ENCODE measurements at regions of chr9 and their contacts with region 1.

Region 1: DNA sequence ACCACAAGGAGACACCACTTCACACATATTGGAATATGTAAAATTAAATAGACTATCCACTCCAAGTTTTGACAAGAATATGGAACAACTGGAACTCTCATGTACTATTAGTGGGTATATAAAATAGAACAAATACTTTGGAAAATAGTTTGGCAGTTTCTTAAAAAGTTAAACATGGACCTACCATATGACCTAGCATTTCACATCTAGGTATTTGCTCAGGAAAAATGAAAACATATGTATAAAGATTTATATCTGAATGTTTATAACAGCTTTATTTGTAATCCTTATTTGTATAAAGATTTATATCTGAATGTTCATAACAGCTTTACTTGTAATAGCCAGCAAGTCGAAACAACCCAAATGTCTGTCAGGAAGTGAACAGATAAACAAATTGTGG is 49.2 kb downstream of the ERP44 start:
- DNase-seq: no peak
- H3K4me3 ChIP-seq: no peak overlapping the region
- H3K27me3 ChIP-seq: no peaks in the 10 kb centered on the region
- CTCF ChIP-seq: no peak

Region 2: GRCh38 chr9:100505564-100506159 is 456.1 kb after region 1 on chr9:
- CTCF ChIA-PET with region 1: no interaction called
- POLR2A ChIA-PET with region 1: interaction called, 10 read pairs
- DNase-seq: no peak
- H3K4me3 ChIP-seq: no peak overlapping the region
- H3K27me3 ChIP-seq: no peaks in the 10 kb centered on the region
- CTCF ChIP-seq: peak; percentile 68

Measured in BJ (cell line).